Ovary (tissue), 10 donors: ENCODE measurements at regions of chr7 and their contacts with region 1.

Region 1: GRCh38 chr7:66187905-66188304 is 17.2 kb upstream of the TPST1 start:
- DNase-seq: no peak
- H3K4me3 ChIP-seq: no peak overlapping the region
- H3K27ac ChIP-seq: no peak overlapping the region
- H3K4me1 ChIP-seq: no peaks in the 10 kb centered on the region
- H3K27me3 ChIP-seq: no peaks in the 10 kb centered on the region
- CTCF ChIP-seq: no peak
- EP300 ChIP-seq: no peak
- POLR2A ChIP-seq: no peak

Region 2: GRCh38 chr7:66219805-66220204 is 31.9 kb after region 1 on chr7:
- intact Hi-C with region 1: loop called in 1 of 4 experiments (anchors 2 kb)
- DNase-seq: no peak
- H3K4me3 ChIP-seq: no peak overlapping the region
- H3K27ac ChIP-seq: no peak overlapping the region
- H3K4me1 ChIP-seq: peaks cover 3% of the 10 kb centered on the region
- H3K27me3 ChIP-seq: no peaks in the 10 kb centered on the region
- CTCF ChIP-seq: no peak
- EP300 ChIP-seq: no peak
- POLR2A ChIP-seq: no peak

Region 3: DNA sequence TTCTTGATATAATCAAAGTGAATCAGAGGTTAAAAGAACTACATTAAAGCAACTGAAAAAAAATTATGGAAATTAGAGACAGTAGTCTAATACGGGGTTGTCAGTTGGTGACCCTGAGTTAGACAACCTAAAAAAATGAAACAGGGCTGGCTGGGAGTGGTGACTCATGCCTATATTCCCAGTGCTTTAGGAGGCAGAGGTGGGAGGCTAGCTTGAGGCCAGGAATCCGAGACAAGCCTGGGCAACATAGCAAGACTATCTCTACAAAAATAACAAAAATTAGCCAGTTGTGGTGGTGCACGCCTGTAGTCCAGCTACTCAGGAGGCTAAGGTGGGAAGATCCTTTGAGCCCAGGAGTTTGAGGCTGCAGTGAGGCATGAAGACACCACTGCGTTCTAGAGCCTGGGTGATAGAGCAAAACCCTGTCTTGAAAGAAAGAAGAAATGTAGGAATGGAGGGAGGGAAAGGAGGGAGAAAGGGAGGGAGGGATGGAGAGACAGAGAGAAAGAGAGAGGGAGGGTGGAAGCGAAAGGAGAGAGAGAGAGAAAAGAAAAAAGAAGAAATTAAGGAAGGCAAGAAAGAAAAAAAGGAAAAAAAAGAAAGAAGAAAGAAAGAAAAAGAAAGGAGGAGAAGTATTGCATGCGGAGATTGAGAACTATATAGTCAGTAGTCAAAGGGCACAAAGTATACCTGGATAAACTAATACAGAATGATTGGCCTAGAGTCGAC is 183.4 kb after region 1 on chr7:
- intact Hi-C with region 1: no loop called
- DNase-seq: no peak
- H3K4me3 ChIP-seq: no peak overlapping the region
- H3K27ac ChIP-seq: no peak overlapping the region
- H3K4me1 ChIP-seq: no peaks in the 10 kb centered on the region
- H3K27me3 ChIP-seq: no peaks in the 10 kb centered on the region
- CTCF ChIP-seq: no peak
- EP300 ChIP-seq: no peak
- POLR2A ChIP-seq: no peak

Region 4: GRCh38 chr7:68166525-68166924 is 1978.6 kb after region 1 on chr7:
- intact Hi-C with region 1: no loop called
- DNase-seq: no peak
- H3K4me3 ChIP-seq: no peak overlapping the region
- H3K27ac ChIP-seq: no peak overlapping the region
- H3K4me1 ChIP-seq: no peaks in the 10 kb centered on the region
- H3K27me3 ChIP-seq: no peaks in the 10 kb centered on the region
- CTCF ChIP-seq: no peak
- EP300 ChIP-seq: no peak
- POLR2A ChIP-seq: no peak